ENCODE measurements at regions of chr1 and their contacts with region 1.

Region 1: GRCh38 chr1:37692078-37692833 is at the start of gene CDCA8:
- DNase-seq: peak; percentile 99
- H3K4me3 Mint-ChIP-seq: peak within 1 kb of the TSS; percentile 97
- H3K27ac Mint-ChIP-seq: peak within 1 kb of the TSS; percentile 90
- H3K4me1 Mint-ChIP-seq: peaks cover 63% of the 10 kb centered on the region
- H3K27me3 Mint-ChIP-seq: no peaks in the 10 kb centered on the region
- total RNA-seq, gene CDCA8: 73.5 to 73.6 TPM

Region 2: GRCh38 chr1:37474046-37474759 is 218.1 kb before region 1 on chr1 and contains the start of gene ZC3H12A:
- CTCF ChIA-PET with region 1: interaction called, 3 read pairs
- POLR2A ChIA-PET with region 1: interaction called, 38 read pairs
- DNase-seq: peak; percentile 93
- H3K4me3 Mint-ChIP-seq: peak within 1 kb of the TSS; percentile 98
- H3K27ac Mint-ChIP-seq: peak within 1 kb of the TSS; percentile 99
- H3K4me1 Mint-ChIP-seq: peaks cover 53% of the 10 kb centered on the region
- H3K27me3 Mint-ChIP-seq: no peaks in the 10 kb centered on the region
- total RNA-seq, gene ZC3H12A: 29.9 to 31.1 TPM

Region 3: GRCh38 chr1:37514350-37515184 is 177.7 kb before region 1 on chr1 and contains the start of gene MEAF6:
- CTCF ChIA-PET with region 1: interaction called, 16 read pairs
- POLR2A ChIA-PET with region 1: interaction called, 15 read pairs
- DNase-seq: peak; percentile 87
- H3K4me3 Mint-ChIP-seq: peak within 1 kb of the TSS; percentile 94
- H3K27ac Mint-ChIP-seq: peak within 1 kb of the TSS; percentile 83
- H3K4me1 Mint-ChIP-seq: peaks cover 38% of the 10 kb centered on the region
- H3K27me3 Mint-ChIP-seq: no peaks in the 10 kb centered on the region
- total RNA-seq, gene MEAF6: 63.7 to 64.2 TPM

Region 4: GRCh38 chr1:37595440-37596319 is 96.6 kb before region 1 on chr1 and contains the start of gene GNL2:
- CTCF ChIA-PET with region 1: interaction called, 4 read pairs
- POLR2A ChIA-PET with region 1: interaction called, 14 read pairs
- DNase-seq: peak; percentile 97
- H3K4me3 Mint-ChIP-seq: peak within 1 kb of the TSS; percentile 94
- H3K27ac Mint-ChIP-seq: peak within 1 kb of the TSS; percentile 90
- H3K4me1 Mint-ChIP-seq: peaks cover 38% of the 10 kb centered on the region
- H3K27me3 Mint-ChIP-seq: peaks cover 3% of the 10 kb centered on the region
- total RNA-seq, gene GNL2: 50.6 to 52.8 TPM

Region 5: DNA sequence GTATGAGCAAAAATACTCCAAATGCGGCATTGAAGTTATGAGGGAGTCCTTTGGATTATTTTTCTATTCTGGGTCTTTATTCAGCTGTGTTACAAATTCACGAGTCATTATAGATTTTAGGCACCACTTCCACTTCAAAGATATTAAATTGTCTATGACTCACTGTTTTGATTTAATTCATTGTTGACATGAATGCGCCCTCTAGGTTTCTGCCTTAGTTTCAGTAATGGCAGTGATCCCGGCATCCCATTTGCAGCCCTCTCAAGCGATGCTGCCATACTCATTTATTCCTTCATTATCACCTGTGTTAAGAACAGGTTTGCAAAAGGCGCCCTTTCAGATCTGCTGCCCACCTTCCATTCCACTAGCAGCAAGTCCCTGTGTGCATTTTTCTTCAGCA is 71.5 kb before region 1 on chr1:
- CTCF ChIA-PET with region 1: no interaction called
- POLR2A ChIA-PET with region 1: no interaction called
- DNase-seq: no peak
- H3K4me3 Mint-ChIP-seq: no peak overlapping the region
- H3K27ac Mint-ChIP-seq: no peak overlapping the region
- H3K4me1 Mint-ChIP-seq: no peaks in the 10 kb centered on the region
- H3K27me3 Mint-ChIP-seq: peaks cover 38% of the 10 kb centered on the region

Region 6: DNA sequence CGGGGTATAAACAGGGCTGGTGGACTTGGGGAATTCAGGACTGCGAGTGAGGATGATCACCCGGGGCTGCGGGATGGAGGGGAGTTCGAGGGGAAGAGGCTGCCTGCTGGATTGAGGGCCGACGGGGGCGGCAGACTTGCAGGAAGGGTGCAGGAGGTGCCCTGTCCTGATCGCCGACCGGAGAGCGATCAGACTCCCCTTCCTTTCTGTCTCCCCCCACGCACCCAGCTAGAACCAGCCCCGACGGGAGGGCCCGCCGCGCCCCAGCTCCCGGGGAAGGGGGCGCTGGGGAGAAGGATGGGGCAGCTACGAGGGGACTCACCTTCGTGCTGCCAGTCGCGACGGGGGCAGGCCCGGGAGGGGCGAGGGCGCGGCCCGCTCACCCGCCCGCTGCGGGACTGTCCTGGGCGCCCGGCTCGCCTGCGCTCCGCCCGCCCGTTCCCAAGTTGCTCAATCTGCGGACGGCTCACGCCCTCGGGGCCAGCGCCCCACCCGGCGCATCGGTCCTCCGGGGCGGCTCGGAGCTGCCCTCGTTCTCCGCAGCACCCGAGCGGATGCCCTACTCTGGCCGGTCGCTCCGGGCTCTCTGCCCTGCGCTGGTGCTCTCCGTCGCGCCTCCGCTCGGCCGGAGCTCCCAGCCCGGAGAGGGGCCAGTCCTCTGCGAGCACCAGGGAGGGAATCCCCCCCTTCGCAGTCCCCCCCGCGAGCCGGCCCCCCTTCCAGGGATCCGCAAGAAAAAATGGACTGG is 57.8 kb before region 1 on chr1 and contains the start of gene RSPO1:
- CTCF ChIA-PET with region 1: no interaction called
- POLR2A ChIA-PET with region 1: no interaction called
- DNase-seq: no peak
- H3K4me3 Mint-ChIP-seq: no peak within 1 kb of the TSS
- H3K27ac Mint-ChIP-seq: no peak within 1 kb of the TSS
- H3K4me1 Mint-ChIP-seq: peaks cover 5% of the 10 kb centered on the region
- H3K27me3 Mint-ChIP-seq: peaks cover 79% of the 10 kb centered on the region
- total RNA-seq, gene RSPO1: not detected

Region 7: DNA sequence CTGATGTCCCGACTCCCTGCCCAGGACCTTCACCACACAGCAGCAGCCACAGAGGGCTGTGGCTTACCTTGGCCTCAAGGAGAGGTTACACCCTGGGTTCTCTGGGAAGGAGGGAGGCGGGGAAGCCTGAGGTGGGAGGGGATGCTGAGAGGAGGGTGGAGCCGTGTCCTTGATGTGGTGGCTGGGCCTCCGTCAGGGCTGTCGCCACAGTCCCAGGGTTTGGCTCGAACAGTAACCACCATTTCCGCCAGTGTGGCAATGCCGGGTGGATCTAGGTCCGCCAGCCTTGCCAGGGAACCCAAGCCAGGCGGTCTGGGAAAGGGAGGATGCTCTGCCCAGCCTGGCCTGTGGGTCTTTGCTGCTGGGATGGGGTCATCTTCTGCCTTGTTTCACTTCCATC is 18.3 kb before region 1 on chr1:
- CTCF ChIA-PET with region 1: no interaction called
- POLR2A ChIA-PET with region 1: interaction called, 11 read pairs
- DNase-seq: peak; percentile 84
- H3K4me3 Mint-ChIP-seq: no peak overlapping the region
- H3K27ac Mint-ChIP-seq: no peak overlapping the region
- H3K4me1 Mint-ChIP-seq: peaks cover 21% of the 10 kb centered on the region
- H3K27me3 Mint-ChIP-seq: peaks cover 30% of the 10 kb centered on the region

Region 8: DNA sequence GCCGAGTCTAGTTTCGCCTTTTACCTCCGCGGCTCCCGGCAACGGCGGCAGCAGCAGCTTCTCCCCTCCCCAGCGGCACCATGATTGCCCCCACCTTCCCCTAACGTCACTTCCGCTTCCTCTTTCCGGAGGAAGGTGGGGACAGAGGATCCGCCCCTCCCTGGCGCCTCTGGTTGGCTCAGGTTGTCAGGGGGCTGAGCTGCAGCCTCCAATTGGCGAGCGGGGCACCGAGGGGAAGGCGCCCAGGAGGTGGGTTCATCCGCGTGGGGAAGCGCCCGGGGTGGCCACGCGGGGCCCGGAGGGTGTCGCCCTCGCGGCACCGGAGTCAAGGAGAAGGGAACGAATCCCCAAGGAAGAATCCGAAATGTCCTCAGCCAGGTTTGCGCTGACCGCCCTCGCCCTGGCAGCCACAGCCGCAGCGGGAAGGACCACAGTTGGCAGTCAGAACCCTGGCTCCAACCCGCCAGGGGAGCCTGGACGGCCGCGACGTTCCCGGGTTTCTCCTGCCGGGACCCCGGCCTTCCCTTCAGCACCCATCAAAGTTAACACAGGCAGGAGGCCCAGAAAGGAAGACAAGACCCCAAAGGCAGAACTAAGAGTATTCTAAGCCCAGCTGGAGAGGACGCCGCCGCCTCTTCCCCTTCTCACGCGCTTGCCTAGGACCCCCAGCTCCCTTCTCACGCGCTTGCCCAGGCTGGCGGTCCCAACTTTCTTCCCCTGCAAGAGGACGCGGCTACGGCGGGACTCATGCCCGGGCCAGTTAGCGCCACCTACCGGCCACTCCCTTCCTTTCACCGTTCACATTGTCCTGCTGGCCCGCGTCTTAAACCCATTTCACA is 167.5 kb after region 1 on chr1 and contains the start of gene MTF1:
- CTCF ChIA-PET with region 1: interaction called, 34 read pairs
- POLR2A ChIA-PET with region 1: interaction called, 24 read pairs
- DNase-seq: peak; percentile 97
- H3K4me3 Mint-ChIP-seq: peak within 1 kb of the TSS; percentile 100
- H3K27ac Mint-ChIP-seq: peak within 1 kb of the TSS; percentile 99
- H3K4me1 Mint-ChIP-seq: peaks cover 45% of the 10 kb centered on the region
- H3K27me3 Mint-ChIP-seq: no peaks in the 10 kb centered on the region
- total RNA-seq, gene MTF1: 27.5 to 28.8 TPM